Calu3 (cell line): ENCODE measurements at regions of chr5 and their contacts with region 1.

Region 1: GRCh38 chr5:145283101-145283810 is 551.9 kb downstream of the PRELID2 start:
- DNase-seq: no peak
- H3K4me3 Mint-ChIP-seq: no peak overlapping the region
- H3K27ac Mint-ChIP-seq: no peak overlapping the region
- H3K4me1 Mint-ChIP-seq: no peaks in the 10 kb centered on the region
- H3K27me3 Mint-ChIP-seq: no peaks in the 10 kb centered on the region
- CTCF ChIP-seq: no peak

Region 2: GRCh38 chr5:144951001-144951400 is 332.3 kb before region 1 on chr5:
- CTCF ChIA-PET with region 1: no interaction called
- intact Hi-C with region 1: no loop called
- DNase-seq: no peak
- H3K4me3 Mint-ChIP-seq: no peak overlapping the region
- H3K27ac Mint-ChIP-seq: no peak overlapping the region
- H3K4me1 Mint-ChIP-seq: no peaks in the 10 kb centered on the region
- H3K27me3 Mint-ChIP-seq: no peaks in the 10 kb centered on the region
- CTCF ChIP-seq: no peak

Region 3: DNA sequence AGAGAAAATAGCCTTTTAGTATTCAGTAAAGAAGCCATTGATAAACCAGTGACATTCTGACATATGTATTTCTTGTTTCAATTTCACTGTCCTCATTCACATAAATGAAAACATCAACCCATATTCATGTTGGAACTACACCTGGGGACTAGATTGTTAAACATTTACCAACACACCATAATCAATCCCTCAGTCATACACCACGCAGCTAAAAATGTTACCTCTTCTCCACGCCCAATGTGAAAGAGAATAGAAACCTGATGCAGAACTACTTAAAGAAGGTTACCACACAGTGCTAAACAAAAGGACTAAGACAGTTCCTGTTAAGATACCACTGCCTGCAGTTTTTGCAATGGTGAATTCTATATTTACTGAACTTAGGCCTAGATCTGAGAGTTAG is 33.0 kb after region 1 on chr5:
- CTCF ChIA-PET with region 1: no interaction called
- intact Hi-C with region 1: loop called (anchors 1 kb)
- DNase-seq: no peak
- H3K4me3 Mint-ChIP-seq: no peak overlapping the region
- H3K27ac Mint-ChIP-seq: no peak overlapping the region
- H3K4me1 Mint-ChIP-seq: no peaks in the 10 kb centered on the region
- H3K27me3 Mint-ChIP-seq: no peaks in the 10 kb centered on the region
- CTCF ChIP-seq: no peak

Region 4: DNA sequence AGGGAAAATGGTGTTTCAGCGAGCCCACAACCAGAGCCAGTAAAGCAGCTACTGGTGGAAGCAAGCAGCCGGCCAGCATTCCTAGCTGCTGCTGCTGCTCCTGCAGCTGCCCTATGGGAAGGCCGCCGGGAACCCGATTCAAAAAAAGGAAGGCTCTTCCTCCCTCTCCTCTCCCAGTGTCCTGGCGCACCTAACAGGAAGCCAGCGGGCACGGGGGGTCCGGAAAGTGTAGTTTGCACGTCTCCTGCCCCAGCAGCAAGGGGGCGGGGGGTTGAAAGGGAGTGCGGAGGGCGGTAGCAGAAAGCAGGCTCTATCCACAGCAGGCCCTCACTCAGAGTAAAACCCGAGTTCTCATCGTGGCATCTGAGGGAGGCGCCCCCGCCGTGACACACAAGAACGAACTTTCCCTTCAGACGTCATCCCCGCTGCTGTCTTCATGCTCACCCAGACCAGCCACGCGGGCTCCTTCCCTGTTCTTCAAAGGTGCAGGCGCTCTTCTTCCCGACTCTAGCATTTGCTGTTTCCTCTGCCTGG is 573.1 kb after region 1 on chr5:
- CTCF ChIA-PET with region 1: no interaction called
- intact Hi-C with region 1: no loop called
- DNase-seq: peak; percentile 54
- H3K4me3 Mint-ChIP-seq: peak overlapping the region; percentile 58
- H3K27ac Mint-ChIP-seq: peak overlapping the region; percentile 85
- H3K4me1 Mint-ChIP-seq: peaks cover 40% of the 10 kb centered on the region
- H3K27me3 Mint-ChIP-seq: no peaks in the 10 kb centered on the region
- CTCF ChIP-seq: no peak